CD8-positive, alpha-beta T cell (primary cell): ENCODE measurements at regions of chr11 and their contacts with region 1.

Region 1: GRCh38 chr11:123407130-123407995 is 22.7 kb upstream of the GRAMD1B start:
- DNase-seq: peak; percentile 30 to 82 (median 66)
- ATAC-seq: peak; percentile 77
- H3K4me3 ChIP-seq: no peak overlapping the region
- H3K4me3 Mint-ChIP-seq: no peak overlapping the region
- H3K27ac ChIP-seq: no peak overlapping the region
- H3K27ac Mint-ChIP-seq: no peak overlapping the region
- H3K4me1 ChIP-seq: no peaks in the 10 kb centered on the region
- H3K4me1 Mint-ChIP-seq: peaks cover 3% of the 10 kb centered on the region
- H3K27me3 ChIP-seq: no peaks in the 10 kb centered on the region
- H3K27me3 Mint-ChIP-seq: peaks cover 3% of the 10 kb centered on the region
- CTCF ChIP-seq: peak; percentile 52

Region 2: GRCh38 chr11:122655527-122656072 is 751.8 kb before region 1 on chr11 and contains the start of gene UBASH3B:
- CTCF ChIA-PET with region 1: no interaction called
- POLR2A ChIA-PET with region 1: no interaction called
- intact Hi-C with region 1: no loop called
- DNase-seq: peak; percentile 10 to 75 (median 57)
- ATAC-seq: peak; percentile 72
- H3K4me3 ChIP-seq: peak within 1 kb of the TSS; percentile 96 to 97
- H3K4me3 Mint-ChIP-seq: peak within 1 kb of the TSS; percentile 99
- H3K27ac ChIP-seq: peak within 1 kb of the TSS; percentile 61 to 71
- H3K27ac Mint-ChIP-seq: peak within 1 kb of the TSS; percentile 93
- H3K4me1 ChIP-seq: peaks cover 44% of the 10 kb centered on the region
- H3K4me1 Mint-ChIP-seq: peaks cover 46% of the 10 kb centered on the region
- H3K27me3 ChIP-seq: peaks cover 0 to 2% of the 10 kb centered on the region in 2 experiments
- H3K27me3 Mint-ChIP-seq: no peaks in the 10 kb centered on the region
- CTCF ChIP-seq: no peak
- total RNA-seq, gene UBASH3B: 16.7 to 19.3 TPM

Region 3: GRCh38 chr11:123429913-123430720 is 22.8 kb after region 1 on chr11 and contains the start of gene GRAMD1B:
- CTCF ChIA-PET with region 1: interaction called, 23 read pairs
- POLR2A ChIA-PET with region 1: no interaction called
- intact Hi-C with region 1: loop called (anchors 2 kb)
- DNase-seq: peak; percentile 48 to 86 (median 74)
- ATAC-seq: peak; percentile 86
- H3K4me3 ChIP-seq: peak within 1 kb of the TSS; percentile 61 to 70
- H3K4me3 Mint-ChIP-seq: peak within 1 kb of the TSS; percentile 91
- H3K27ac ChIP-seq: peak within 1 kb of the TSS; percentile 53 to 54
- H3K27ac Mint-ChIP-seq: peak within 1 kb of the TSS; percentile 92
- H3K4me1 ChIP-seq: peaks cover 14% of the 10 kb centered on the region
- H3K4me1 Mint-ChIP-seq: peaks cover 22% of the 10 kb centered on the region
- H3K27me3 ChIP-seq: no peaks in the 10 kb centered on the region
- H3K27me3 Mint-ChIP-seq: no peaks in the 10 kb centered on the region
- CTCF ChIP-seq: peak; percentile 18
- total RNA-seq, gene GRAMD1B: 18.6 to 20.7 TPM

Region 4: DNA sequence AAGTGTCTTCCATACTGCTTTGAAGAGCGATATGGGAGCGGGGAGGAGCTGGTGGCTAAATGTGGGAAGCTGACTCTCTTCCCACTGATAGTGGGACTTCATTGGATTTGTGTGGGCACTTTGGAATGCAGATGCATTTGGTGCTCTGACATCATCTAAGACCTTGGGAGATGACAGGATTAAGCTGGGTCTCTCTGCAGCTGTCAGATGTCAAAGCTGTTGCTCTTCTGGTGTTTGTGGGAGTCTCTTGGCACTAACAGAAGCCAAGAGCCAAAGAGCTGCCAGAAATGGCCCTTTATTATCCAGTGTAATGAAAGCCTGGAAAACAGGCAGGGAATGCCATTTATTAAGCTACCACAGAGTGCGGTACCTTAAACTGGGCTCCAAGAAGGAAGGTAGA is 43.3 kb after region 1 on chr11:
- CTCF ChIA-PET with region 1: interaction called, 14 read pairs
- POLR2A ChIA-PET with region 1: no interaction called
- intact Hi-C with region 1: no loop called
- DNase-seq: no peak
- ATAC-seq: no peak
- H3K4me3 ChIP-seq: no peak overlapping the region
- H3K4me3 Mint-ChIP-seq: no peak overlapping the region
- H3K27ac ChIP-seq: no peak overlapping the region
- H3K27ac Mint-ChIP-seq: no peak overlapping the region
- H3K4me1 ChIP-seq: peaks cover 11% of the 10 kb centered on the region
- H3K4me1 Mint-ChIP-seq: peaks cover 15% of the 10 kb centered on the region
- H3K27me3 ChIP-seq: no peaks in the 10 kb centered on the region
- H3K27me3 Mint-ChIP-seq: no peaks in the 10 kb centered on the region
- CTCF ChIP-seq: no peak

Region 5: GRCh38 chr11:123469089-123469488 is 61.7 kb after region 1 on chr11:
- CTCF ChIA-PET with region 1: interaction called, 251 read pairs
- POLR2A ChIA-PET with region 1: interaction called, 3 read pairs
- intact Hi-C with region 1: no loop called
- DNase-seq: no peak
- ATAC-seq: no peak
- H3K4me3 ChIP-seq: no peak overlapping the region
- H3K4me3 Mint-ChIP-seq: no peak overlapping the region
- H3K27ac ChIP-seq: no peak overlapping the region
- H3K27ac Mint-ChIP-seq: no peak overlapping the region
- H3K4me1 ChIP-seq: no peaks in the 10 kb centered on the region
- H3K4me1 Mint-ChIP-seq: no peaks in the 10 kb centered on the region
- H3K27me3 ChIP-seq: no peaks in the 10 kb centered on the region
- H3K27me3 Mint-ChIP-seq: no peaks in the 10 kb centered on the region
- CTCF ChIP-seq: no peak

Region 6: GRCh38 chr11:123487157-123487780 is 79.9 kb after region 1 on chr11:
- CTCF ChIA-PET with region 1: interaction called, 20 read pairs
- POLR2A ChIA-PET with region 1: no interaction called
- intact Hi-C with region 1: no loop called
- DNase-seq: no peak
- ATAC-seq: no peak
- H3K4me3 ChIP-seq: no peak overlapping the region
- H3K4me3 Mint-ChIP-seq: no peak overlapping the region
- H3K27ac ChIP-seq: no peak overlapping the region
- H3K27ac Mint-ChIP-seq: no peak overlapping the region
- H3K4me1 ChIP-seq: no peaks in the 10 kb centered on the region
- H3K4me1 Mint-ChIP-seq: no peaks in the 10 kb centered on the region
- H3K27me3 ChIP-seq: no peaks in the 10 kb centered on the region
- H3K27me3 Mint-ChIP-seq: no peaks in the 10 kb centered on the region
- CTCF ChIP-seq: no peak